Activated CD4-positive, alpha-beta memory T cell treated with anti-CD3 and anti-CD28 coated beads for 36 hours (primary cell): ENCODE measurements at regions of chr6 and their contacts with region 1.

Region 1: DNA sequence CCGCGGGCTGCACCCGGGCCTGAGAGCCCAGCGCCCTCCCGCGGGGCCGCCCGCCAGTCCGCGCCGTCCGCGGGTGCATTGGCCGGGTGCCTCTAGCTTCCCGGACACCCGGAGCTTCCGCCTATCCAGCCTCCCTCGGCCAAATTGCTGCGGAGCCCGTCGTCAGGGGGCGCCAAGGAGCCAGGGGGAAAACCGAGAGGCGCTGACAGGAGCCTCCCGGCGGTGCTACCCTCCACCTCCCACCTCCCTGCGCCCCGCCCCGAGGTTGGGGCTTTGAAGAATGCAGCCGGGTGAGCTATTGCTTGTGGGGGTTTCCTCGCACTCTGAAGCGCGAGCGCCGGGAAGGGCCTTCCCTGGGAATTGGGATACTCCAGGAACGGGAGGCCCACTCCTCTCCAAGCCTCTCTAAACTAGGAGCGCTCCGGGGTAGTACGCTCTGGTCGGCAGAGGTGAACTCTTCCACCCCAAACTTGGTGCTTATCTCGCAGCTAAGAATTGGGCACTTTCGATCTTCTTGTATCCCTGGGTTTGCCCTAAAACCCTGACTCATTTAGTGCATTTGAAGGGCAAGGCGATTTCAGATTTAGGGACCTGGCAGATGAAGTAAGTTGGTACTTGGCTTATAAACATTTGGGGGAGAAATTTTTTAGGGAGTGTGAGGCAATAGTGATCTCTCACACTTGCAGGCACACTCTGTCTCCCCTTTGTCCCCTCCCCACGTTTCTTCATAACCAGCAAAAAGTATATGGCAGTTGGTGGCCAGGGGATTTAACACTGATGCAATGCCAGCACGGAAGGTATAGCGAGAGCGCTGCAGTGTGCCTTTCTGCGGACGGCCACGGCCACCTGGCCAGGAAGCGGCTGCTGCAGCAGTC is 501 bp downstream of the BEND6 start:
- DNase-seq: peak; percentile 81
- H3K4me3 Mint-ChIP-seq: peak overlapping the region; percentile 72
- H3K27ac Mint-ChIP-seq: no peak overlapping the region
- H3K4me1 Mint-ChIP-seq: peaks cover 21% of the 10 kb centered on the region
- H3K27me3 Mint-ChIP-seq: peaks cover 45% of the 10 kb centered on the region

Region 2: GRCh38 chr6:56794421-56794820 is 161.0 kb before region 1 on chr6:
- CTCF ChIA-PET with region 1: no interaction called
- POLR2A ChIA-PET with region 1: no interaction called
- intact Hi-C with region 1: no loop called
- DNase-seq: no peak
- H3K4me3 Mint-ChIP-seq: no peak overlapping the region
- H3K27ac Mint-ChIP-seq: no peak overlapping the region
- H3K4me1 Mint-ChIP-seq: no peaks in the 10 kb centered on the region
- H3K27me3 Mint-ChIP-seq: peaks cover 4% of the 10 kb centered on the region

Region 3: DNA sequence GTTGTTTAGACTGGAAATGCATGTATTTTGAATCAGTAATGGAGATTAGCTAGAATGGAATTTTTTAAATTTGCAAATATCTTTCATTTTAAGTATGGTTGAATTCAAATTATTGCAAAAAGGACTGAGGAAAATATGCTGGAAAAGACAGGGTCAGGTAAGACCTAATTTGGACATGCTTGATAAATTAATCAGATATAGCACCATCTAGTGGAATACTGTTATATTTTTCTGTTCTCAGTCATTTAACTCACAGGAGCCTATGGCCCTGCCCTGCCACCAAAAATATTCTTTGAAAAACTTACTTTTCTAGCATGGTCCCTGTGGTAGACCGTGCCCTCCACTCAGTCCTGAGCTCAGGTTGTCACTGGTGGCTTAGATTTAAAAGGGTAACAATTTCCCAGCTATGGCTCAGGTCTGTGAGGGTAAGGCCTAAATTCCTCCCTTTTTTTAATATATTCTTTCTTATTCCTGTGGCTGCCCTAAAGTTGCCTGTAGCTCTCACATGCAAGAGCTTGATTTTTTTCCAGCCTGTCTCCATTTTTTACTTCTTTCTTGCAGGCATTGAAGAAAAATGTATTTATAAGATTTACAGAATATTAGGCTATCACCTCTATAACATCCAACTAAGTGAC is 65.8 kb after region 1 on chr6:
- CTCF ChIA-PET with region 1: interaction called, 4 read pairs
- POLR2A ChIA-PET with region 1: no interaction called
- intact Hi-C with region 1: loop called (anchors 2 kb)
- DNase-seq: no peak
- H3K4me3 Mint-ChIP-seq: no peak overlapping the region
- H3K27ac Mint-ChIP-seq: no peak overlapping the region
- H3K4me1 Mint-ChIP-seq: no peaks in the 10 kb centered on the region
- H3K27me3 Mint-ChIP-seq: peaks cover 7% of the 10 kb centered on the region

Region 4: DNA sequence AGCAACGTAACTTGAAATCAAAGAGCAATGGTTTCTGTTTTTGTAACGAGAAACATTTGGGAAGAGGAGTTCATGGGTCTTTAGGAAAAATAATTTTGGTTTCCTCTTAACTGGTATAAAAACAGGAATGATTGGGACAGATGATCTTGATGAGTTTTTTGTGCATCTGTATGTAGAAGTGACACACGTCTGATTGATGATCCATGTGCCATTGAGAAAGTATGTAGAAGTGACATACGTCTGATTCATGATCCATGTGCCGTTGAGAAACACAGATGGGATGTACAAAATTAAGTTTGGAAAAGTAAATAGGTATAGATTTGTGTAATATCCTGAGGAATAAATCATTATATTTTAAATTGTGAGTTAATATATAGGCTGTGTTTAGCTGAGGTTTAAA is 93.2 kb after region 1 on chr6:
- CTCF ChIA-PET with region 1: interaction called, 4 read pairs
- POLR2A ChIA-PET with region 1: no interaction called
- intact Hi-C with region 1: loop called (anchors 1 kb)
- DNase-seq: no peak
- H3K4me3 Mint-ChIP-seq: peak overlapping the region; percentile 64
- H3K27ac Mint-ChIP-seq: no peak overlapping the region
- H3K4me1 Mint-ChIP-seq: peaks cover 19% of the 10 kb centered on the region
- H3K27me3 Mint-ChIP-seq: peaks cover 10% of the 10 kb centered on the region

Region 5: GRCh38 chr6:57089687-57090460 is 134.5 kb after region 1 on chr6 and contains the start of gene ZNF451:
- CTCF ChIA-PET with region 1: no interaction called
- POLR2A ChIA-PET with region 1: no interaction called
- intact Hi-C with region 1: loop called (anchors 5 kb)
- DNase-seq: peak; percentile 99
- H3K4me3 Mint-ChIP-seq: peak within 1 kb of the TSS; percentile 85
- H3K27ac Mint-ChIP-seq: peak within 1 kb of the TSS; percentile 92
- H3K4me1 Mint-ChIP-seq: peaks cover 30% of the 10 kb centered on the region
- H3K27me3 Mint-ChIP-seq: no peaks in the 10 kb centered on the region
- total RNA-seq, gene ZNF451: 38.2 to 41.4 TPM

Region 6: GRCh38 chr6:57267586-57268293 is 312.3 kb after region 1 on chr6:
- CTCF ChIA-PET with region 1: no interaction called
- POLR2A ChIA-PET with region 1: no interaction called
- intact Hi-C with region 1: loop called (anchors 2 kb)
- DNase-seq: peak; percentile 50
- H3K4me3 Mint-ChIP-seq: no peak overlapping the region
- H3K27ac Mint-ChIP-seq: no peak overlapping the region
- H3K4me1 Mint-ChIP-seq: peaks cover 11% of the 10 kb centered on the region
- H3K27me3 Mint-ChIP-seq: peaks cover 12% of the 10 kb centered on the region